Gastrocnemius medialis (tissue), 4 donors: ENCODE measurements at regions of chr10 and their contacts with region 1.

Region 1: GRCh38 chr10:28676968-28677887 is at the start of gene BAMBI:
- DNase-seq: peak; percentile 74 to 79
- ATAC-seq: peak; percentile 91 to 93
- H3K4me3 ChIP-seq: peak within 1 kb of the TSS; percentile 65 to 83 (median 72)
- H3K27ac ChIP-seq: peak within 1 kb of the TSS in 3 of 4 donors; percentile 55 to 67 (median 62)
- H3K4me1 ChIP-seq: peaks cover 18 to 21% of the 10 kb centered on the region in 2 donors
- H3K27me3 ChIP-seq: peaks cover 0 to 13% (median 4%) of the 10 kb centered on the region in 3 donors
- CTCF ChIP-seq: peak; percentile 12 to 83 (median 72)
- POLR2A ChIP-seq: peak; percentile 84 to 95
- total RNA-seq, gene BAMBI: 0.31 to 1.8 (median 0.82) TPM in 3 of 4 donors, not detected in the other

Region 2: GRCh38 chr10:28532383-28533175 is 144.6 kb before region 1 on chr10 and contains the start of gene WAC:
- in situ Hi-C with region 1: no loop called
- intact Hi-C with region 1: loop called (anchors 2 kb)
- DNase-seq: peak; percentile 92 to 94
- ATAC-seq: peak; percentile 91 to 93
- H3K4me3 ChIP-seq: peak within 1 kb of the TSS; percentile 78 to 99 (median 90)
- H3K27ac ChIP-seq: peak within 1 kb of the TSS; percentile 95 to 99 (median 98)
- H3K4me1 ChIP-seq: peaks cover 33 to 37% of the 10 kb centered on the region in 2 donors
- H3K27me3 ChIP-seq: no peaks in the 10 kb centered on the region
- CTCF ChIP-seq: peak in 3 of 5 experiments; percentile 14 to 17 (median 14)
- POLR2A ChIP-seq: peak in 1 of 2 donors; percentile 93
- total RNA-seq, gene WAC: 55.7 to 83.4 (median 69.6) TPM

Region 3: GRCh38 chr10:28892816-28893547 is 215.8 kb after region 1 on chr10:
- in situ Hi-C with region 1: no loop called
- intact Hi-C with region 1: loop called (anchors 5 kb)
- DNase-seq: no peak
- ATAC-seq: no peak
- H3K4me3 ChIP-seq: no peak overlapping the region
- H3K27ac ChIP-seq: no peak overlapping the region
- H3K4me1 ChIP-seq: no peaks in the 10 kb centered on the region
- H3K27me3 ChIP-seq: no peaks in the 10 kb centered on the region
- CTCF ChIP-seq: no peak
- POLR2A ChIP-seq: no peak

Region 4: DNA sequence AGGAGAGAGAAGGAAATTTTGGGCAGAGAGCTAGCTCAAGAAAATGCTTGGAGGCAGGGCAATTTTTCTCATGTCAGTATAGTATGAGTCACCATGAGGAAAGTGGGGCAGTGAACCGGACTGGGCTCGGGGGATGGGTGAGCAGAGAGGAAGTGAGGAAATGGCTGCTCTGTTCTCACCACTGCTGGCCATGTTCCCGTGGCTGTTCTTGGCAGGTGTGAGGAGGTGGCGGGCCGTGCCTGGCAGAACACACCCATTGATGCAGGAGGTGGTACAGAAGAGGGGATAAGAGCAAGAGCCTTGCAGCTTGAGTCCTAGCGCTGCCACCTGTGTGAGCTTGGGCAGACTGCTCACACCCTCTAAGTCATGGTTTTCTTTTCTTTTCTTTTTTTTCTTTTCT is 307.2 kb after region 1 on chr10:
- in situ Hi-C with region 1: loop called in 1 of 4 experiments (anchors 10 kb)
- intact Hi-C with region 1: no loop called
- DNase-seq: peak; percentile 77 to 78
- ATAC-seq: peak; percentile 95 to 97
- H3K4me3 ChIP-seq: no peak overlapping the region
- H3K27ac ChIP-seq: peak overlapping the region in 2 of 4 donors; percentile 10 to 51
- H3K4me1 ChIP-seq: peaks cover 0 to 21% of the 10 kb centered on the region in 2 donors
- H3K27me3 ChIP-seq: no peaks in the 10 kb centered on the region
- CTCF ChIP-seq: no peak
- POLR2A ChIP-seq: no peak

Region 5: GRCh38 chr10:28991326-28992270 is 314.4 kb after region 1 on chr10:
- in situ Hi-C with region 1: loop called in 1 of 4 experiments (anchors 10 kb)
- intact Hi-C with region 1: loop called (anchors 1 kb)
- DNase-seq: no peak
- ATAC-seq: peak in 1 of 2 donors; percentile 51
- H3K4me3 ChIP-seq: no peak overlapping the region
- H3K27ac ChIP-seq: no peak overlapping the region
- H3K4me1 ChIP-seq: no peaks in the 10 kb centered on the region
- H3K27me3 ChIP-seq: no peaks in the 10 kb centered on the region
- CTCF ChIP-seq: peak; percentile 65 to 82 (median 74)
- POLR2A ChIP-seq: no peak

Region 6: GRCh38 chr10:29131952-29132820 is 455.0 kb after region 1 on chr10:
- in situ Hi-C with region 1: no loop called
- intact Hi-C with region 1: loop called (anchors 5 kb)
- DNase-seq: no peak
- ATAC-seq: peak in 1 of 2 donors; percentile 44
- H3K4me3 ChIP-seq: no peak overlapping the region
- H3K27ac ChIP-seq: peak overlapping the region in 2 of 4 donors; percentile 1 to 25
- H3K4me1 ChIP-seq: peaks cover 9 to 20% of the 10 kb centered on the region in 2 donors
- H3K27me3 ChIP-seq: no peaks in the 10 kb centered on the region
- CTCF ChIP-seq: no peak
- POLR2A ChIP-seq: no peak

Region 7: GRCh38 chr10:29304264-29305030 is 627.2 kb after region 1 on chr10:
- in situ Hi-C with region 1: no loop called
- intact Hi-C with region 1: loop called (anchors 5 kb)
- DNase-seq: peak; percentile 13 to 27
- ATAC-seq: peak; percentile 71 to 74
- H3K4me3 ChIP-seq: no peak overlapping the region
- H3K27ac ChIP-seq: no peak overlapping the region
- H3K4me1 ChIP-seq: no peaks in the 10 kb centered on the region
- H3K27me3 ChIP-seq: no peaks in the 10 kb centered on the region
- CTCF ChIP-seq: peak; percentile 56 to 79 (median 72)
- POLR2A ChIP-seq: no peak